Activated CD4-positive, alpha-beta T cell treated with anti-CD3 and anti-CD28 coated beads for 36 hours (primary cell): ENCODE measurements at regions of chr18 and their contacts with region 1.

Region 1: GRCh38 chr18:31146809-31147208 is 15.8 kb downstream of the DSC1 start:
- DNase-seq: no peak
- ATAC-seq: no peak
- H3K4me3 Mint-ChIP-seq: no peak overlapping the region
- H3K27ac Mint-ChIP-seq: no peak overlapping the region
- H3K4me1 Mint-ChIP-seq: no peaks in the 10 kb centered on the region
- H3K27me3 Mint-ChIP-seq: no peaks in the 10 kb centered on the region

Region 2: GRCh38 chr18:31134988-31135529 is 11.8 kb before region 1 on chr18:
- CTCF ChIA-PET with region 1: no interaction called
- POLR2A ChIA-PET with region 1: no interaction called
- intact Hi-C with region 1: loop called in 1 of 2 experiments (anchors 1 kb)
- DNase-seq: no peak
- ATAC-seq: no peak
- H3K4me3 Mint-ChIP-seq: no peak overlapping the region
- H3K27ac Mint-ChIP-seq: no peak overlapping the region
- H3K4me1 Mint-ChIP-seq: no peaks in the 10 kb centered on the region
- H3K27me3 Mint-ChIP-seq: no peaks in the 10 kb centered on the region